ENCODE measurements at regions of chr11 and their contacts with region 1.

Region 1: DNA sequence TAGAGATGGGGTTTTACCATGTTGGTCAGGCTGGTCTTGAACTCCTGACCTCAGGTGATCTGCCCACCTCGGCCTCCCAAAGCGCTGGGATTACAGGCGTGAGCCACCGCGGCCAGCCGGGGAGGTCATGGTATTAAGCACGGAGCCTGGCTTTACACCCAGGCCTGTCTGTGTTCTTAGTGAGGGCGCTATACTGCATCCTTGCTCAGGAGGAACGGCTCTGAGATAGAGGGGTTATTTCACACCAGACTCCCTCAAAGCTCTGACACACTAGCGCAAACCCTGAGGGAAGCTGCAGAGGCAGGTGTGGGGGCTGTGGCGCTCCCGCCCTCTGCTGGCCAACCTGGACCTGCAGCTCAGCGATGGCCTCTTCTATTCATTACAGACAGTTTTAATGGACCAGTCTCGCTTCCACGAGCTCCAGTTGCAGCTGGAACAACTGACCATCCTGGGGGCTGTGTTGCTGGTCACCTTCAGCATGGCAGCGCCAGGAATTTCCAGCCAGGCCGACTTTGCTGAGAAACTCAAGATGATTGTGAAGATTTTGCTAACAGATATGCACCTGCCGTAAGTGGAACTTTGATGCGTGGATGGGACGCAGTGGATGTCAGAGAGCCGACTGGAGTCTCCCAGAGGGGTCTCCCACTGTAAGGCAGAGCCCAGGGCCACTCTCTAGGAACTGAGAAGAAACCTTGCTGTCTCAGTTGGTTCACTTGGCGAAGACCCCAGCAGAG is 26.2 kb downstream of the TCP11L1 start:
- DNase-seq: peak; percentile 28
- ATAC-seq: peak; percentile 72
- H3K4me3 ChIP-seq: no peak overlapping the region
- H3K27ac ChIP-seq: no peak overlapping the region
- H3K4me1 ChIP-seq: peaks cover 13 to 21% of the 10 kb centered on the region in 2 experiments
- H3K27me3 ChIP-seq: no peaks in the 10 kb centered on the region
- CTCF ChIP-seq: peak; percentile 81 to 96 (median 93)
- POLR2A ChIP-seq: no peak
- RAD21 ChIP-seq: peak; percentile 95

Region 2: GRCh38 chr11:32751381-32751780 is 314.2 kb before region 1 on chr11:
- CTCF ChIA-PET with region 1: interaction called, 6 read pairs
- POLR2A ChIA-PET with region 1: no interaction called
- RAD21 ChIA-PET with region 1: no interaction called
- intact Hi-C with region 1: loop called (anchors 5 kb)
- DNase-seq: no peak
- ATAC-seq: peak; percentile 62; the same call in 1 of the 2 replicates
- H3K4me3 ChIP-seq: no peak overlapping the region
- H3K27ac ChIP-seq: no peak overlapping the region
- H3K4me1 ChIP-seq: no peaks in the 10 kb centered on the region
- H3K27me3 ChIP-seq: no peaks in the 10 kb centered on the region
- CTCF ChIP-seq: 0 out of 6 replicates have a peak, but pooled peaks of 2 of the 3 experiments have one; percentile 15 to 20
- POLR2A ChIP-seq: no peak
- RAD21 ChIP-seq: no peak

Region 3: GRCh38 chr11:32838505-32838904 is 227.1 kb before region 1 on chr11:
- CTCF ChIA-PET with region 1: no interaction called
- POLR2A ChIA-PET with region 1: no interaction called
- RAD21 ChIA-PET with region 1: no interaction called
- intact Hi-C with region 1: loop called (anchors 1 kb)
- DNase-seq: no peak
- ATAC-seq: peak; percentile 84
- H3K4me3 ChIP-seq: no peak overlapping the region
- H3K27ac ChIP-seq: no peak overlapping the region; the same call in 1 of the 2 replicates
- H3K4me1 ChIP-seq: peaks cover 15 to 16% of the 10 kb centered on the region in 2 experiments
- H3K27me3 ChIP-seq: no peaks in the 10 kb centered on the region
- CTCF ChIP-seq: no peak
- POLR2A ChIP-seq: no peak
- RAD21 ChIP-seq: no peak

Region 4: DNA sequence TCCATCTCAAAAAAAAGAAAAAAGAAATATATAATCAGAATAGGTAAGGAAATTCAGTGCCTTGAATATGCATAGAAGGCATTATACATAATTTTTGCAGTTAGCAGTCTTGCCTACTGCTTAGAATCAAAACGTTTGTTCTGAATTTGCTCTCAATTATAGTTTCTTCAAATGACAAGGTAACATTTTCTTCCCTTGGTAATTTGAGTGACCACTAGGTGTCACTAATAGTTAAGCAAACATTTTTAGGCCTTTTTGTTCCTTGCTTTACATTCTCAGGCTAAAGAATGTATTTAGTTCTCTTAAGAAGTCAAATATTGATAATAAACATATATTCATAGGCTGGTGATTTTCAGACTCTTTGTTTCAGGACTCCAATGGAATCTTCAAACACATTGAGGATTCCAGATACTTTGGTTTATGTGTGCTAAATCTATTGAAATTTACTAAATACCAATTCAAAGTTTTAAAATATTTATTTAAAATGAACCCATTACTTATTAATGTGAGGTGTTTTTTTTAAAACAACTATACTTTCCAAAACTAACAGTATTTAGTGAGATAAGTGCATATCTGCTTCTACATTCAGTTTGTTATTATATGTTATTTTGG is 105.0 kb before region 1 on chr11:
- CTCF ChIA-PET with region 1: interaction called, 18 read pairs
- POLR2A ChIA-PET with region 1: no interaction called
- RAD21 ChIA-PET with region 1: interaction called in 1 of 2 experiments, 3 read pairs
- intact Hi-C with region 1: loop called (anchors 1 kb)
- DNase-seq: peak; percentile 28
- ATAC-seq: no peak
- H3K4me3 ChIP-seq: no peak overlapping the region
- H3K27ac ChIP-seq: no peak overlapping the region
- H3K4me1 ChIP-seq: no peaks in the 10 kb centered on the region
- H3K27me3 ChIP-seq: no peaks in the 10 kb centered on the region
- CTCF ChIP-seq: peak; percentile 49 to 72 (median 64)
- POLR2A ChIP-seq: no peak
- RAD21 ChIP-seq: peak; percentile 82

Region 5: GRCh38 chr11:32987851-32988250 is 77.8 kb before region 1 on chr11:
- CTCF ChIA-PET with region 1: no interaction called
- POLR2A ChIA-PET with region 1: no interaction called
- RAD21 ChIA-PET with region 1: no interaction called
- intact Hi-C with region 1: no loop called
- DNase-seq: no peak
- ATAC-seq: peak; percentile 34; the same call in 1 of the 2 replicates
- H3K4me3 ChIP-seq: no peak overlapping the region
- H3K27ac ChIP-seq: no peak overlapping the region
- H3K4me1 ChIP-seq: no peaks in the 10 kb centered on the region
- H3K27me3 ChIP-seq: no peaks in the 10 kb centered on the region
- CTCF ChIP-seq: no peak
- POLR2A ChIP-seq: no peak
- RAD21 ChIP-seq: no peak

Region 6: DNA sequence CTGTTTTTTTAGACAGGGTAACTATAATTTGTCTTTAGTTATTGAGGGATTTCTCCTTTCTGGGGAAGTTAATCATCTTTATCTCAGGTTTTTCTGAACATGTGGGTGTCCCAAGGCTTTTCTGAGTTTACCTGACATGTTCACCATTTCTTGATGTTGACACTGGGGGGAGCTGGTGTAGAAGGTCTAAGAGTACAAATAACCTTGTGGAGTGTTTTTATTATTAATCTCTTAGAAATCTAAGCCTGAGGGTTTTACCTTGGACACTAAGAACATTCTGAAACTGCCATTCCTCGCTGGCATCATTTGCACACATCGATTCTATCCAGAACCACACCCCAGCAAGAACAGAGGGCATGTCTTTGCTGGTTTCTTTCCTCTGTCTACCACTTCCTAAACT is 650.6 kb after region 1 on chr11:
- CTCF ChIA-PET with region 1: no interaction called
- POLR2A ChIA-PET with region 1: no interaction called
- RAD21 ChIA-PET with region 1: no interaction called
- intact Hi-C with region 1: no loop called
- DNase-seq: no peak
- ATAC-seq: peak; percentile 75
- H3K4me3 ChIP-seq: no peak overlapping the region
- H3K27ac ChIP-seq: no peak overlapping the region
- H3K4me1 ChIP-seq: no peaks in the 10 kb centered on the region
- H3K27me3 ChIP-seq: no peaks in the 10 kb centered on the region
- CTCF ChIP-seq: peak; percentile 37 to 51 (median 47); a peak in 4 of 6 replicates
- POLR2A ChIP-seq: no peak
- RAD21 ChIP-seq: peak; percentile 66

Measured in HCT116 (cell line).